GM10248 (cell line): ENCODE measurements at regions of chr6 and their contacts with region 1.

Region 1: DNA sequence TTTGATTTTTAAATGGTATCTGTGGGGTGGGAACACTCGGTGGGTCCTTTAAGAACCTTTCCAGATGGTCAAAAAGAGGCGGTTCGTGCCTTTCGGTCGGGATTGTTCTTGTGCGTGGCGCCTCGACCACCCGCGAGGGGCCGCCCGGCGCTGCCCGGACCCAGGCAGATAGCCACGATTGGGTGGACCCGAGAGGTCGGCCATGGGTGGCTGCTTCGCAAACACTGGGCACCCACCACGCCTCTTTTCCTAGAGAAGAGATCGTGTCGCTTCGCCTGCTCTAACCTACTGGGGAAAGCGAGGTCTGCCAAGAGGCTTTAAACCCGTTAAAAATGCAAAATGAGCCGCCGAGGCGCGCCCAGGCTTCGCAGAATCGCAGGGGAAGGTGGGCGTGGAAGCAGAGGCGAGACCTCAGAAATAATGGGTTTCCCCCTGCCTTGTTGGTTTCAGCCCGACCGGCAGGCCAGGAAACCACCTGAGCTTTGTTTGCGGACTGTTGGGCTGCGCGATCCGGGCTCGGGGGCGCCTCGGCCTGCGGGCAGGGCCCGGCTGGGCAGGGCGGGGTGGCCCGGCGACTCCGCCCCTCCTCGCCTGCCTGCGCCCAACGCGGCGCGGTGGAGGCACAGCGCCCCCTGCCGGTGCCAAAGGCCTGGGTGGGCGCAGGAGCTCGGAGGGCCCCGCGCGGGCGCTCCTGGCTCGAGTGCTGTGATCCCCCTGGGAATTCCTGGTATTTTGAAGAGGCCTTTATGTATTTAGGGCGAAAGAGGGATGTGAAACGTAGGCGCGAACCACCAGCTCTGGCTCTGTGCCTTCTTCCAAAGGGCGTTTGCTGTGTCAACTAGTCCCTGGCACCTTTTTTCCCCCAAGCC is 1.6 kb downstream of the MARCKS start:
- DNase-seq: peak; percentile 95
- CTCF ChIP-seq: peak; percentile 93

Region 2: DNA sequence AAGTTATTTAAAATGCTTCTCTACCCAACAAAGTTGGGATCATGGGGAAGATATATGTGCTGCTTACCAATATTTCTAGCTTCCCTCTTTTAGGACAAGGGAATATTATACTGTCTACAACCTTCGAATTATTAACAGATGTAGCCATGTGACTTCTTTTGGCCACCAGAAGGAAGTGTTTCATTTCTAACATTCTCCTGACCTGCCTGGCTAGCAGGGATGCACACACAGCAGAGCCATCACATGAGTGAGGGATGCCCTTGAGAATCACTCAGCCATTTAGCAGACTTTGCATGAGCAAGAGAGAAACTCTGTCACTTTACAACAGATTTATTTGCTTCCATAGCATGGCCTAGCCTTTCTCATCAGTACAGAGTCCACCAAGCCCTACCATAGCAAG is 232.2 kb before region 1 on chr6:
- CTCF ChIA-PET with region 1: interaction called, 37 read pairs
- POLR2A ChIA-PET with region 1: interaction called, 12 read pairs
- DNase-seq: no peak
- CTCF ChIP-seq: no peak

Region 3: GRCh38 chr6:113642714-113643406 is 215.9 kb before region 1 on chr6:
- CTCF ChIA-PET with region 1: interaction called, 27 read pairs
- POLR2A ChIA-PET with region 1: interaction called, 7 read pairs
- DNase-seq: peak; percentile 73
- CTCF ChIP-seq: no peak

Region 4: DNA sequence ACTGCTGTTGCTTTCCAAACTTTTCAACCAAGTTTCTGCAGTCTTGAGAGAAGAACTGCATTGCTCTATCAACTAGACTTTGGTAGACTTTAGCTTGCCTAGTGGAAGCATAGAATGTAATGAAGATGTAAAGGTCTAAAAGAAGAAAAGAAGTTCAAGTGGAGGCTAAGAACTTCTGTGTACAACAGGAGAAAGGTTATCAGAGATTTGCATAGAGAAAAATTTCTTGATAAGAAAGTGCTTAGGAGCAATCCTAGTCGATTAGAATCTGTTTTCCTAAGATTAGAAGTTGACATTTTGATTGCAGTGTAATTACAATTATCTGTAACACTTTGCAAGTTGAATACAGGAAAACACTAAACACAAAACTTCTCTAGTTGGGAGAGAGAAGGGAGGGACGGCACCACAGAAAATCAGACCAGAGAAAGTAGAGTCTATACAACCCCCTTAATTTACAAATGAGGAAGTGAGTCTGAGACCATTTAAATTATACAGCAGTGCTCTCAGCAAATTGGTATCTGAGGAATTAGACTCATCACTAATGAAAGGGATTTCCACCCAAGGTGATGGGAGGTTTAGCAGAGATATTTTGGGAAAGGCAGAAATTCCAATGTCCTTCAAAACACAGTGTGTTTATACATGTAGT is 195.9 kb before region 1 on chr6:
- CTCF ChIA-PET with region 1: interaction called, 12 read pairs
- POLR2A ChIA-PET with region 1: no interaction called
- DNase-seq: peak; percentile 35
- CTCF ChIP-seq: no peak

Region 5: DNA sequence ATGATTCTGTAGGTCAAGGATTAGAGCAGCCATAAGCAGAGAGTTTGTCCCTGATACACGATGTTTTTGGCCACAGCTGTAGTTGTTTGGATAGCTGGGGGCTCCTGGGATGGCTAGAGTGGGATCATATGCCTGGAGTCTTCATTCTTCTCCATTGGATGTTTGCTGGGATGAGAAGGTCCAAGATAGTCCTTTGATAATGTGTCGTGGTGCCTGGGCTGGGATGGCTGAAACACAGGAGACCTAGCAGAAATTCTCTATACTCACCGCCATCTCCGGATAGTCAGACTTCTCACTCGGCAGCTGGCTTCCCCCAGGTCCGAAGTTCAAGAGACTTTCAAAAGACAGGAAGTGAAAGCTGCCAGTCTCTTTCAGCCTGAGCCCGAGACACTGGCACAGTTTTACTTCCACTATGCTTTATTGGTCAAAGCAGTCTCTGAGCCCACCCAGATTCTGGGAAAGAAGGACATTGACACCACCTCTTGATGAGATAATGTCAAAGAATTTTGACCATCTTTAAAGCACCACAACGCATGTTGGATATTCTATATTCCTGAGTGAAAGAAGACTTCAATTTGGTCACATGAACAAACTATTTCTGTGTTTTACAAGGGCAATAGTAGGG is 14.4 kb after region 1 on chr6:
- CTCF ChIA-PET with region 1: interaction called, 31 read pairs
- POLR2A ChIA-PET with region 1: no interaction called
- DNase-seq: peak; percentile 23
- CTCF ChIP-seq: peak; percentile 2